Psoas muscle (tissue), 8 donors: ENCODE measurements at regions of chr7 and their contacts with region 1.

Region 1: GRCh38 chr7:88090671-88091070 is 129.2 kb downstream of the SRI start:
- DNase-seq: no peak
- ATAC-seq: no peak
- H3K4me3 ChIP-seq: no peak overlapping the region
- H3K27ac ChIP-seq: no peak overlapping the region
- H3K4me1 ChIP-seq: no peaks in the 10 kb centered on the region
- H3K27me3 ChIP-seq: no peaks in the 10 kb centered on the region
- CTCF ChIP-seq: no peak

Region 2: DNA sequence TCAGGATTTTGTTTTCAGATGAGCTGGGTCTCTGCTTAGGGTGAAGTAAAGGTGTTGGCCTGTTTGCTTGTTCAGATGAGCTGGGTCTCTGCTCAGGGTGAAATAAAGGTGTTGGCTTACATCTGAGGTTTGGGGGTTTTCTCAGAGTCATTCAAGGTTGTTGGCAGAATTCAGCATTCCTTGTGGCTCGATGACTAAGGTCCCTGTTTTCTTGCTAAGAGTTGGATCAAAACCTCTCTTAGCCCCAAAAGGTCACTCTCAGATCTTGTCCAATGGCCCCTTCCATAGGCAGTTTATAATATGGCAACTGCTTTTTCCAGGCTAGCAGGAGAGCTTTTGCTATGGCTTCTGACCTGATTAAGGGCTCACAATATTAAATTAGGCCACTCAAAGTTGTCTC is 50.0 kb before region 1 on chr7:
- intact Hi-C with region 1: loop called in 1 of 2 experiments (anchors 10 kb)
- DNase-seq: no peak
- ATAC-seq: no peak
- H3K4me3 ChIP-seq: no peak overlapping the region
- H3K27ac ChIP-seq: no peak overlapping the region
- H3K4me1 ChIP-seq: peaks cover 4% of the 10 kb centered on the region
- H3K27me3 ChIP-seq: no peaks in the 10 kb centered on the region
- CTCF ChIP-seq: no peak

Region 3: DNA sequence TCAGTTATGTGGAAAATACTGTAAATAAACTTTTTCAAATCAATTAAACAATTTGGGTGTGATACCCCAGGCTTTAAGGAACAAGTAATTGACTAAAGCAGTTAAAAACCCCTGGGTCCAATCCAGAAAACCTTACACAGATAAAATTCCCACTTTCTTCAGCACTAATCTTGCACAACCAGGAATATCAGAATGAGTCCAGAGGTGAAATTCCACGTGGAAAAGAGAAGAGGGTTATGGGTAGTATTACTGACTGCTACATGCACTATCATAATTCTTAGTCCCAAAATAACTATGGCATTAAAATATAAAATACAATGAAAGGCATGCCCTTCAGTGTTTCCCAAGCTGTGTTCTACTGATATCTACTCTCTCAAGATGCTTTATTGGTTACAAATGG is 351.7 kb after region 1 on chr7:
- intact Hi-C with region 1: no loop called
- DNase-seq: no peak
- ATAC-seq: no peak
- H3K4me3 ChIP-seq: no peak overlapping the region
- H3K27ac ChIP-seq: no peak overlapping the region
- H3K4me1 ChIP-seq: no peaks in the 10 kb centered on the region
- H3K27me3 ChIP-seq: no peaks in the 10 kb centered on the region
- CTCF ChIP-seq: no peak